HCT116 (cell line): ENCODE measurements at regions of chr13 and their contacts with region 1.

Region 1: GRCh38 chr13:48769107-48769704 is 115.5 kb downstream of the CYSLTR2 start:
- DNase-seq: peak; percentile 85
- ATAC-seq: peak; percentile 98
- H3K4me3 ChIP-seq: no peak overlapping the region
- H3K27ac ChIP-seq: no peak overlapping the region
- H3K4me1 ChIP-seq: 0 out of 4 replicates have a peak, but pooled peaks cover 0 to 3% of the 10 kb centered on the region in 2 experiments
- H3K27me3 ChIP-seq: no peaks in the 10 kb centered on the region
- CTCF ChIP-seq: peak; percentile 99 to 100 (median 100)
- POLR2A ChIP-seq: no peak
- RAD21 ChIP-seq: peak; percentile 100

Region 2: DNA sequence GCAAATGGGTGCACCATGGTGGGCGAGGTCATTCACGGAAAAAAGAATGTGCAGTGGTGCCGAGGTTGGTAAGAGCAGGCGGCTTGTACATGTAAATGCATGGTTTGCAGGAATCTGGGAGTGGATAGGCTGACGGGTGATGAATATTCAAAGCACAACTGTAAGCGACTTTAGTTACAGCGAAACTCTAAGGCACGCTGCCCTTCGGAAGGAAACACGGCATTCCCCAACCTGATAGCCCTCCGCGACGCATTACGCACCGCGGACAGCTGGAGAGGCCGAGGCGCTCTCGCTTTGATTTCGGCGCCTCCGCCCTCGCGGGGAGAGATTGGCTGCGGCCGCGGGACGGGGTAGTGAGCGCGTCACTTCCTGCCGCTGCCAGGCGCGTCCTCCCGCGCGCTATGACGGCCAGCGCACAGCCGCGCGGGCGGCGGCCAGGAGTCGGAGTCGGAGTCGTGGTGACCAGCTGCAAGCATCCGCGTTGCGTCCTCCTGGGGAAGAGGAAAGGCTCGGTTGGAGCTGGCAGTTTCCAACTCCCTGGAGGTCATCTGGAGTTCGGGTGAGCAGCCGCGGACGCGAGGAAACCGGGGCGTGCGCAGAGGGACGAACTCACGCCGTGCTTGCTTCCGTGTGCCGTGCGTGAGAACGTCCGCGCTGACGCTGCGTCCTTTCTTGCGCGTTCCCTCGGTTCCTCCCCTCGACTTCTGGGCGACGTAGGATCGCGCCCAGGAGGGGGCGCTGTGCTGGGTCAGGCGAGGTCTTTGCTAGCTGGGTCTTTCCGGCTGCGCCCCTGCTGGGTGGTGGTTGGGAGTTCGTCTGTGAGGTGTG is 731.6 kb before region 1 on chr13 and contains the start of gene NUDT15:
- CTCF ChIA-PET with region 1: no interaction called
- POLR2A ChIA-PET with region 1: no interaction called
- RAD21 ChIA-PET with region 1: no interaction called
- intact Hi-C with region 1: loop called (anchors 5 kb)
- DNase-seq: peak; percentile 95
- ATAC-seq: peak; percentile 93
- H3K4me3 ChIP-seq: peak within 1 kb of the TSS; percentile 69 to 71
- H3K27ac ChIP-seq: peak within 1 kb of the TSS; percentile 93
- H3K4me1 ChIP-seq: peaks cover 15 to 28% of the 10 kb centered on the region in 2 experiments
- H3K27me3 ChIP-seq: no peaks in the 10 kb centered on the region
- CTCF ChIP-seq: peak; percentile 93 to 99 (median 99)
- POLR2A ChIP-seq: peak; percentile 65
- RAD21 ChIP-seq: peak; percentile 46; the same call in 1 of the 2 replicates
- total RNA-seq, gene NUDT15: 38.6 TPM

Region 3: GRCh38 chr13:48126944-48127830 is 642.0 kb before region 1 on chr13:
- CTCF ChIA-PET with region 1: interaction called, 7 read pairs
- POLR2A ChIA-PET with region 1: no interaction called
- RAD21 ChIA-PET with region 1: no interaction called
- intact Hi-C with region 1: loop called (anchors 5 kb)
- DNase-seq: peak; percentile 59
- ATAC-seq: peak; percentile 87
- H3K4me3 ChIP-seq: no peak overlapping the region
- H3K27ac ChIP-seq: no peak overlapping the region
- H3K4me1 ChIP-seq: 0 out of 4 replicates have a peak, but pooled peaks cover 0 to 5% of the 10 kb centered on the region in 2 experiments
- H3K27me3 ChIP-seq: no peaks in the 10 kb centered on the region
- CTCF ChIP-seq: peak; percentile 70 to 82 (median 72)
- POLR2A ChIP-seq: no peak
- RAD21 ChIP-seq: peak; percentile 78

Region 4: GRCh38 chr13:48318821-48319511 is 450.2 kb before region 1 on chr13:
- CTCF ChIA-PET with region 1: no interaction called
- POLR2A ChIA-PET with region 1: no interaction called
- RAD21 ChIA-PET with region 1: no interaction called
- intact Hi-C with region 1: no loop called
- DNase-seq: no peak
- ATAC-seq: no peak
- H3K4me3 ChIP-seq: no peak overlapping the region
- H3K27ac ChIP-seq: no peak overlapping the region
- H3K4me1 ChIP-seq: no peaks in the 10 kb centered on the region
- H3K27me3 ChIP-seq: no peaks in the 10 kb centered on the region
- CTCF ChIP-seq: no peak
- POLR2A ChIP-seq: no peak
- RAD21 ChIP-seq: no peak

Region 5: DNA sequence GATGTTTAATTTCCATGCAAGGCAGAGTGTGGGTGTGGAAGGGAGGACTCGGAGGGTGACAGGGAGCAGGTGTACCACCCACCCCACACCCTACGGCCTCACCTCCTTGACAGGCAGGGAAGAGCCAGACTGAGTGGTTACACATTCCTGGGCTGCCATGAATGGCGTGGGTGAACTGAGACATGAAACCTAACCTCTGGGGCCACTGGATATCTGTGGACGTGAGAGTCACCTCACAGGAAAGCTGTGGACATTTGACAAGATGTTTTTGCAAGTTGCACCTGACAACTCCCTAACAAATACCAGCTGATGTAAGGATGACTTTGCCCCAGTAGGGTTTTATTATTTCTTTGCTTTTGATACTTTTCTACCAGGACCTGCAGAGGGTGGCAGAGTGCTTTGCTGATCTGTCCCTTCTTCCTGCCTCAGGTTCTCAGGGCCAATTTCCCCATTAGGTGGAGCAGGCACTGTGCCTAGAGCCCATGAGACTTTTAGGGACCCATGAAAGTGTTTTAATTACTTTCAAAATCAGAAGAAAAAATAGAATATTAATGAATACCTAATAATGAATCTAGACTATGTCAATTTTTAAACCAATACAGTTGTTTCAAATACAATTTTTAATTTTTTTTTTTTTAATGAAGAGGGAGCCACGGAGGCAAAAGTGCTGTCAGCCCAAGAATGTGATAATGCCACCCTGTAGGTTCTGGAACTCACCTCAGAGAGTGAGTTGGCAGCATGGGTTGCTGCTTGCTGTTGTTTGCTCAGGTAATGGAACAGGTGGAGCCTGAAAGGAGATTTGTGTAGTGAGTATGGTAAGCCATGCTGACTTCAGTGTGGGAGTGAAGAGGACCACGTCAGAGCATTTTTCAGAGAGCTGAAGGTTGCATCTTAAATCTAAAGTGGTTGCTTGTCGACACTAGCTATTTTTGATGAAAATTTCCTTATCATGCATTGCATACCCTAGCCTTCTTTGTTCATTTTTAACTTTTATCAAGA is 173.5 kb before region 1 on chr13:
- CTCF ChIA-PET with region 1: interaction called, 20 read pairs
- POLR2A ChIA-PET with region 1: no interaction called
- RAD21 ChIA-PET with region 1: interaction called, 4 to 13 read pairs
- intact Hi-C with region 1: loop called (anchors 1 kb)
- DNase-seq: peak; percentile 50
- ATAC-seq: peak; percentile 93
- H3K4me3 ChIP-seq: no peak overlapping the region
- H3K27ac ChIP-seq: no peak overlapping the region
- H3K4me1 ChIP-seq: peaks cover 0 to under 1% of the 10 kb centered on the region in 2 experiments; a peak in 1 of 4 replicates
- H3K27me3 ChIP-seq: no peaks in the 10 kb centered on the region
- CTCF ChIP-seq: peak; percentile 59 to 98 (median 67)
- POLR2A ChIP-seq: no peak
- RAD21 ChIP-seq: peak; percentile 93

Region 6: GRCh38 chr13:49606747-49607648 is 837.8 kb after region 1 on chr13:
- CTCF ChIA-PET with region 1: no interaction called
- POLR2A ChIA-PET with region 1: no interaction called
- RAD21 ChIA-PET with region 1: no interaction called
- intact Hi-C with region 1: loop called (anchors 5 kb)
- DNase-seq: peak; percentile 78
- ATAC-seq: peak; percentile 98
- H3K4me3 ChIP-seq: peak overlapping the region; percentile 1 to 42
- H3K27ac ChIP-seq: no peak overlapping the region
- H3K4me1 ChIP-seq: peaks cover 0 to 5% of the 10 kb centered on the region in 2 experiments; a peak in 2 of 4 replicates
- H3K27me3 ChIP-seq: no peaks in the 10 kb centered on the region
- CTCF ChIP-seq: peak; percentile 73 to 87 (median 74)
- POLR2A ChIP-seq: no peak
- RAD21 ChIP-seq: peak; percentile 94